CD8-positive, alpha-beta T cell (primary cell): ENCODE measurements at regions of chr10 and their contacts with region 1.

Region 1: GRCh38 chr10:109922976-109923921 is at the start of gene XPNPEP1:
- DNase-seq: peak; percentile 55 to 93 (median 78)
- ATAC-seq: peak; percentile 90
- H3K4me3 ChIP-seq: peak within 1 kb of the TSS; percentile 75 to 80
- H3K4me3 Mint-ChIP-seq: peak within 1 kb of the TSS; percentile 87
- H3K27ac ChIP-seq: peak within 1 kb of the TSS; percentile 76 to 91
- H3K27ac Mint-ChIP-seq: peak within 1 kb of the TSS; percentile 92
- H3K4me1 ChIP-seq: peaks cover 37% of the 10 kb centered on the region
- H3K4me1 Mint-ChIP-seq: peaks cover 52% of the 10 kb centered on the region
- H3K27me3 ChIP-seq: no peaks in the 10 kb centered on the region
- H3K27me3 Mint-ChIP-seq: no peaks in the 10 kb centered on the region
- CTCF ChIP-seq: no peak
- total RNA-seq, gene XPNPEP1: 50.4 to 54.7 TPM

Region 2: GRCh38 chr10:109894516-109894915 is 28.7 kb before region 1 on chr10:
- CTCF ChIA-PET with region 1: interaction called, 6 read pairs
- POLR2A ChIA-PET with region 1: interaction called, 3 read pairs
- intact Hi-C with region 1: loop called in 1 of 2 experiments (anchors 5 kb)
- DNase-seq: no peak
- ATAC-seq: no peak
- H3K4me3 ChIP-seq: no peak overlapping the region
- H3K4me3 Mint-ChIP-seq: no peak overlapping the region
- H3K27ac ChIP-seq: no peak overlapping the region
- H3K27ac Mint-ChIP-seq: no peak overlapping the region
- H3K4me1 ChIP-seq: peaks cover 4% of the 10 kb centered on the region
- H3K4me1 Mint-ChIP-seq: peaks cover 56% of the 10 kb centered on the region
- H3K27me3 ChIP-seq: no peaks in the 10 kb centered on the region
- H3K27me3 Mint-ChIP-seq: no peaks in the 10 kb centered on the region
- CTCF ChIP-seq: no peak

Region 3: GRCh38 chr10:109934958-109935706 is 11.9 kb after region 1 on chr10:
- CTCF ChIA-PET with region 1: interaction called, 4 read pairs
- POLR2A ChIA-PET with region 1: interaction called, 6 read pairs
- intact Hi-C with region 1: loop called in 1 of 2 experiments (anchors 1 kb)
- DNase-seq: peak in 4 of 9 experiments; percentile 15 to 56 (median 36)
- ATAC-seq: peak; percentile 32
- H3K4me3 ChIP-seq: peak overlapping the region in 1 of 2 experiments; percentile 2
- H3K4me3 Mint-ChIP-seq: peak overlapping the region; percentile 77
- H3K27ac ChIP-seq: peak overlapping the region; percentile 33 to 70
- H3K27ac Mint-ChIP-seq: peak overlapping the region; percentile 96
- H3K4me1 ChIP-seq: peaks cover 68% of the 10 kb centered on the region
- H3K4me1 Mint-ChIP-seq: peaks cover 74% of the 10 kb centered on the region
- H3K27me3 ChIP-seq: no peaks in the 10 kb centered on the region
- H3K27me3 Mint-ChIP-seq: no peaks in the 10 kb centered on the region
- CTCF ChIP-seq: no peak

Region 4: DNA sequence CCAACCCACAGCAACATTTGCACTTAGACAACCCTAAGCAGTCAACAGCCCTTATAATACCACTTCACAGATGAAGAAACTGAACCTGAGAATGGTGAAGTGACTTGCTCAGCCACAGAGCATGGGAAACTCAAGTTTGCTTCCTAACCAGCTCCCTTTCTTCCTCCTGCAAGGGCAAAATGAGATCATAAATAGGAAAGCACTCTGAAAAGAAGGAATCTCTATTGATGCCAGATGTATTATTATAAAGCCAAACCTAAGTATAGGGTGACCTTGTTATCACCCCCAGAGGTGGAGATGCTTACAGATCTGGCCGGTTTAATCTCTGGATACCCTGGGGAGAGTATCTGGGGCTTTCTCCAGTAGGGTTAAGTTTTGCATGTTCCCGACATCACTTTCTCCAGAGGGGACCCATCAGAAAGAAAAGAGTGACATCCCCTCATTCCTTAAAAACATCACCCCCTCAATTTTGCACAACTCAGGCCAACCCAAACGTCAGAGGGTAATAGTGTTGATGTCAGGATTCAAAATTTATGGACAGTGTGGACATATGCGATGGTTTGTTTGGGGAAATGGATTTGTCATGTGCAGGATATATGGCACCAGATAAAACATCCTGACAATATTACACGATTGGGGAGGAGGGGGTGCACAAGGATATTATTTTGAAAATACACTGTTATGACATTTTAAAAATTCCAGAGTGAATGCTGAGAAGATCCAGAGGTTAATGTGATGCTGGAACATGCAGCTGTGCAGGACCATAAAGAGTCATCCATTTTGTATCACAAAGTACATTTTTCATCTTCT is 24.1 kb after region 1 on chr10:
- CTCF ChIA-PET with region 1: no interaction called
- POLR2A ChIA-PET with region 1: no interaction called
- intact Hi-C with region 1: no loop called
- DNase-seq: no peak
- ATAC-seq: no peak
- H3K4me3 ChIP-seq: no peak overlapping the region
- H3K4me3 Mint-ChIP-seq: no peak overlapping the region
- H3K27ac ChIP-seq: no peak overlapping the region
- H3K27ac Mint-ChIP-seq: no peak overlapping the region
- H3K4me1 ChIP-seq: no peaks in the 10 kb centered on the region
- H3K4me1 Mint-ChIP-seq: peaks cover 9% of the 10 kb centered on the region
- H3K27me3 ChIP-seq: no peaks in the 10 kb centered on the region
- H3K27me3 Mint-ChIP-seq: no peaks in the 10 kb centered on the region
- CTCF ChIP-seq: no peak

Region 5: DNA sequence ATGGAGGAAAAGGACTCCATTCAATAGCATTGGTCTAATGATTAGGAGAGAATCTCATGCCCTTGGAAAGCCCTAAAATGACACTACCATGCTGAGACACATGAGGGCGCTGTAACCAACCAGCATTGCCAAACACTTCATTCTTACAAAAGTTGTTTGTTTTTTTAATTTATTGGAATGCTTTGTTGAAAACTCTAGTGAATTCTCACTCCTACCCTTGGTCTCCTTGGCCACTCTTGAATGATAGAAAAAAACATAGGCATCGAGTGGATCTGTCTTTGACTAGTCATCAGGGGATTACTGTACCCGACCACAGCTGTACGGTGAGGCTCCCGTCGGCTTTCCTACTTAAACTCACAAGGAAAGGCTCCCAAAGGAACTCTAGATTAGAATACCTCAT is 55.2 kb after region 1 on chr10:
- CTCF ChIA-PET with region 1: interaction called, 3 read pairs
- POLR2A ChIA-PET with region 1: no interaction called
- intact Hi-C with region 1: loop called in 1 of 2 experiments (anchors 2 kb)
- DNase-seq: peak; percentile 31 to 75 (median 71)
- ATAC-seq: peak; percentile 70
- H3K4me3 ChIP-seq: no peak overlapping the region
- H3K4me3 Mint-ChIP-seq: no peak overlapping the region
- H3K27ac ChIP-seq: no peak overlapping the region
- H3K27ac Mint-ChIP-seq: no peak overlapping the region
- H3K4me1 ChIP-seq: peaks cover 7% of the 10 kb centered on the region
- H3K4me1 Mint-ChIP-seq: peaks cover 16% of the 10 kb centered on the region
- H3K27me3 ChIP-seq: no peaks in the 10 kb centered on the region
- H3K27me3 Mint-ChIP-seq: no peaks in the 10 kb centered on the region
- CTCF ChIP-seq: peak; percentile 91

Region 6: DNA sequence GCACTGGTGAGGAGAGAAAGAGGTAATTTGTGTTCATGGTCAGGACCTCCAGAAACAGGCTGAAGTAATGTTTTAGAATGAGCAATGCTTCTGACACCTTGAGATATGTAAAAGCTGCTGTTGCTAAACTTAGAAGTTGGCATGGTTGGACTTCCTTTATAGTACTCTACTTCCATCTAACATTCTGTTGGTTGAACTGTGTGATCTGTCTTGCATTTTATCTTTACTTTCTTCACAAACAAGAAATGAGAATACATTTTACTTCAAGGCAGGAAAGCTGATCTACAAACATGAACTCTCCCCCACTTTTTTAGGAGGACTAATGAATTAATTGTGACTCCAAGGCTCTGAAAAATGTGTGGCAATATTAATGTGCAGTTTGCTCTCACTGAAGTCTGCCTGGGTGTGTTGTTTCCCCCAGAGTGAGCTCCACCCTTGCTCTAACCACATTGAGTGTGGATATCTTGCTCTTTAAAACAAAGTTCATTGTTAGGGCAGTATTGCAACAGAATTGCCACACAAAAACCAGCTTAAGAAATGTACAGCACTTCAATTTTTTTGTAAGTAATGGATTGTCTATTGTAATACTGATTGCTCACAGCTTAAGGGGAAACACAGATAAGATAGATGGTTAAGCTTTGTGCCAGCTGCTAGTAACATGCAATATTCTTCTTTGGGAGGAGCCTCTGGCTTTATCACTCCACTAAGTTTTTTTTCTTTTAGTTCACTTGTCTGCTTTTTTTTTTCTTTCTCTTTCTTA is 153.5 kb after region 1 on chr10:
- CTCF ChIA-PET with region 1: interaction called, 3 read pairs
- POLR2A ChIA-PET with region 1: no interaction called
- intact Hi-C with region 1: loop called in 1 of 2 experiments (anchors 5 kb)
- DNase-seq: peak in 5 of 9 experiments; percentile 31 to 71 (median 50)
- ATAC-seq: peak; percentile 65
- H3K4me3 ChIP-seq: peak overlapping the region; percentile 17 to 39
- H3K4me3 Mint-ChIP-seq: peak overlapping the region; percentile 79
- H3K27ac ChIP-seq: peak overlapping the region; percentile 48 to 76
- H3K27ac Mint-ChIP-seq: peak overlapping the region; percentile 96
- H3K4me1 ChIP-seq: peaks cover 83% of the 10 kb centered on the region
- H3K4me1 Mint-ChIP-seq: peaks cover 86% of the 10 kb centered on the region
- H3K27me3 ChIP-seq: no peaks in the 10 kb centered on the region
- H3K27me3 Mint-ChIP-seq: no peaks in the 10 kb centered on the region
- CTCF ChIP-seq: no peak